ENCODE measurements at regions of chr14 and their contacts with region 1.

Region 1: GRCh38 chr14:101761032-101761880 is at the start of gene PPP2R5C:
- DNase-seq: peak; percentile 94
- H3K4me3 ChIP-seq: peak within 1 kb of the TSS; percentile 87 to 99 (median 90)
- H3K27ac ChIP-seq: peak within 1 kb of the TSS; percentile 88 to 100 (median 98)
- H3K4me1 ChIP-seq: peaks cover 13 to 38% (median 24%) of the 10 kb centered on the region in 4 donors
- H3K27me3 ChIP-seq: no peaks in the 10 kb centered on the region
- CTCF ChIP-seq: peak in 2 of 5 experiments; percentile 7 to 24
- EP300 ChIP-seq: no peak
- POLR2A ChIP-seq: peak; percentile 92
- total RNA-seq, gene PPP2R5C: 66.2 to 211 (median 116) TPM

Region 2: GRCh38 chr14:101947906-101948665 is 186.8 kb after region 1 on chr14:
- in situ Hi-C with region 1: loop called in 1 of 4 experiments (anchors 25 kb)
- intact Hi-C with region 1: no loop called
- DNase-seq: peak; percentile 100
- H3K4me3 ChIP-seq: peak overlapping the region; percentile 58 to 92 (median 68)
- H3K27ac ChIP-seq: peak overlapping the region; percentile 88 to 99 (median 98)
- H3K4me1 ChIP-seq: peaks cover 3 to 21% (median 17%) of the 10 kb centered on the region in 4 donors
- H3K27me3 ChIP-seq: peaks cover 10% of the 10 kb centered on the region
- CTCF ChIP-seq: no peak
- EP300 ChIP-seq: peak; percentile 54
- POLR2A ChIP-seq: peak; percentile 96

Region 3: GRCh38 chr14:102610968-102611811 is 849.9 kb after region 1 on chr14:
- in situ Hi-C with region 1: no loop called
- intact Hi-C with region 1: no loop called
- DNase-seq: no peak
- H3K4me3 ChIP-seq: no peak overlapping the region
- H3K27ac ChIP-seq: no peak overlapping the region
- H3K4me1 ChIP-seq: peaks cover 0 to 15% (median 4%) of the 10 kb centered on the region in 4 donors
- H3K27me3 ChIP-seq: no peaks in the 10 kb centered on the region
- CTCF ChIP-seq: no peak
- EP300 ChIP-seq: no peak
- POLR2A ChIP-seq: no peak

Measured in transverse colon (tissue), 4 donors.